Adrenal gland (tissue), 19 donors: ENCODE measurements at regions of chr15 and their contacts with region 1.

Region 1: GRCh38 chr15:38671675-38672254 is 107.2 kb upstream of the RASGRP1 start:
- DNase-seq: no peak
- H3K4me3 ChIP-seq: no peak overlapping the region
- H3K27ac ChIP-seq: no peak overlapping the region
- H3K4me1 ChIP-seq: no peaks in the 10 kb centered on the region
- H3K27me3 ChIP-seq: no peaks in the 10 kb centered on the region
- CTCF ChIP-seq: no peak
- POLR2A ChIP-seq: no peak

Region 2: DNA sequence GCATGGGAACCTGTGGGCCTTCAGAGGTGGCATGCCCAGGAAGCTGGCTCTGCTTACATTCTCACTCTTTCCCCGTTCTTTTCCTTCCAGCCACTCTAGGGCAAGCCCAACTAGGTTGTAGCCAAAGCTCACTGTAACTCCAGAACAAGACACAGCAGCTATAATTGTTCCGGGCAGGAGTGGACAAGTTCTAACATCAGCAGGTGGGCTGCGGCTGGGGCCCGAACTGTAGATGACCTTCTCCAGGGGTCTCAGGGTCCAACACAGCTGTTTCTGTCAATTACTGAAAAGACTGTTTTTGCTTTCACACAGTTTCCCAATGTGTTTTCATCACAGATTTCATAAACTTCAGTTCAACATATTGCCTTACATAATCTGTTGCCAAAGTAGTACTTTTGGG is 118.7 kb before region 1 on chr15:
- intact Hi-C with region 1: no loop called
- DNase-seq: no peak
- H3K4me3 ChIP-seq: no peak overlapping the region
- H3K27ac ChIP-seq: no peak overlapping the region
- H3K4me1 ChIP-seq: peaks cover 0 to 8% of the 10 kb centered on the region in 2 donors
- H3K27me3 ChIP-seq: no peaks in the 10 kb centered on the region
- CTCF ChIP-seq: no peak
- POLR2A ChIP-seq: no peak

Region 3: GRCh38 chr15:38563723-38564519 is 107.8 kb before region 1 on chr15:
- intact Hi-C with region 1: loop called in 1 of 2 experiments (anchors 10 kb)
- DNase-seq: peak; percentile 59 to 75 (median 66)
- H3K4me3 ChIP-seq: peak overlapping the region in 3 of 4 donors; percentile 4 to 70 (median 57)
- H3K27ac ChIP-seq: no peak overlapping the region
- H3K4me1 ChIP-seq: peaks cover 0 to 12% of the 10 kb centered on the region in 2 donors
- H3K27me3 ChIP-seq: peaks cover 10% of the 10 kb centered on the region
- CTCF ChIP-seq: peak; percentile 60 to 84 (median 76)
- POLR2A ChIP-seq: no peak

Region 4: DNA sequence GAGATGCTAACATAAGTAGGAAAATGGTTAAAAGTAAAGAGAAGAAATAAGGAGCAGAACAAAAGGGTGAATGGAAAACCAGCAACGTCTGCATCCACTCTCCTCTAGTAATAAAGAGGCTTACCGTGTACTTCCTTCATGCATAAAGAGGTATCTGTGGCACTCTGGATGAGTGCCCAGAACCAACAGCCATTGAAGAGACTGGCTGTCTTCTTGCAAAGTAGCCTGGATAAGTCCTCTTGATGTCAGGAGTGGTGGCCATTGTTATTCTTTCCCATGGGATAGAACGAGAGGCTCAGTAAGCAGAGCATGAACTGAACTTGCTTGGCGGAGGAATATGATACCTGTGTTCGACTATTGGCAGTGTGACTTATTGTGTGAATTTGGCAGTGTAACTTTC is 79.0 kb after region 1 on chr15:
- intact Hi-C with region 1: no loop called
- DNase-seq: no peak
- H3K4me3 ChIP-seq: no peak overlapping the region
- H3K27ac ChIP-seq: no peak overlapping the region
- H3K4me1 ChIP-seq: no peaks in the 10 kb centered on the region
- H3K27me3 ChIP-seq: no peaks in the 10 kb centered on the region
- CTCF ChIP-seq: no peak
- POLR2A ChIP-seq: no peak

Region 5: GRCh38 chr15:38817427-38818156 is 145.8 kb after region 1 on chr15:
- intact Hi-C with region 1: no loop called
- DNase-seq: peak; percentile 66 to 93 (median 79)
- H3K4me3 ChIP-seq: no peak overlapping the region
- H3K27ac ChIP-seq: no peak overlapping the region
- H3K4me1 ChIP-seq: no peaks in the 10 kb centered on the region
- H3K27me3 ChIP-seq: no peaks in the 10 kb centered on the region
- CTCF ChIP-seq: peak; percentile 93 to 99 (median 96)
- POLR2A ChIP-seq: no peak

Region 6: DNA sequence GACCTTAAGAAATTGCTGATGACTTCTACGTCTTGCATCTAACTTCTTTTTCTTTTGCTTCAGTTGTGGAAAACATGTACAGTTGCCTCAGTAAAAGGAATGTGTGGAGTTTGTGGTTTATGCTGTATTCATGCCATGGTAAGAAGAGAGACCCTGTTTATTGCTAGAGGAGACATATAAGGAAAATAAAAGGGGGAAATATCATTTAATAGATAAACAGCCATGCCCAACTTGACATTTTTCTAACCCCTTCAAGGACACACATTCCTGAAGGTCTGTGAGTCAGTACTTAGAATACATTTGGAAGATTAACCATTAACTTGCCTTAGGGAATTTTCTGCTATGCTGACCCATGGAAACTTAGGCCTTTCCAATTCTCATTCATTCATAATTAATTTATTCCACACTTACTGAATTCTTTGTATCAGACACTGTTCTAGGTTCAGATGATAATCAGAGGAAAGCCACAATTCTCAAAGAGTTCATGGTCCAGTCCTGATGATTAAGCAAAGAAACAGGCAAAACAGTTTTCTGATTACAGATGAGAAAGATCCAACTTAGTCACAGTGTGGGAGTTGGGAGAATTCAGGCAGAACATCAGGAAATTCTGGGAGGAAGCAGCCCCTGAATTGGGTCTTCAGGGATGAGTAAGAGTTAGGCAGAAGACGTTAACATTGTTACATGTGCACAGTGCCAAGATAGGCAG is 222.6 kb after region 1 on chr15:
- intact Hi-C with region 1: no loop called
- DNase-seq: no peak
- H3K4me3 ChIP-seq: no peak overlapping the region
- H3K27ac ChIP-seq: no peak overlapping the region
- H3K4me1 ChIP-seq: peaks cover 0 to 20% of the 10 kb centered on the region in 2 donors
- H3K27me3 ChIP-seq: no peaks in the 10 kb centered on the region
- CTCF ChIP-seq: no peak
- POLR2A ChIP-seq: no peak